Mammary epithelial cell (primary cell): ENCODE measurements at regions of chr17 and their contacts with region 1.

Region 1: DNA sequence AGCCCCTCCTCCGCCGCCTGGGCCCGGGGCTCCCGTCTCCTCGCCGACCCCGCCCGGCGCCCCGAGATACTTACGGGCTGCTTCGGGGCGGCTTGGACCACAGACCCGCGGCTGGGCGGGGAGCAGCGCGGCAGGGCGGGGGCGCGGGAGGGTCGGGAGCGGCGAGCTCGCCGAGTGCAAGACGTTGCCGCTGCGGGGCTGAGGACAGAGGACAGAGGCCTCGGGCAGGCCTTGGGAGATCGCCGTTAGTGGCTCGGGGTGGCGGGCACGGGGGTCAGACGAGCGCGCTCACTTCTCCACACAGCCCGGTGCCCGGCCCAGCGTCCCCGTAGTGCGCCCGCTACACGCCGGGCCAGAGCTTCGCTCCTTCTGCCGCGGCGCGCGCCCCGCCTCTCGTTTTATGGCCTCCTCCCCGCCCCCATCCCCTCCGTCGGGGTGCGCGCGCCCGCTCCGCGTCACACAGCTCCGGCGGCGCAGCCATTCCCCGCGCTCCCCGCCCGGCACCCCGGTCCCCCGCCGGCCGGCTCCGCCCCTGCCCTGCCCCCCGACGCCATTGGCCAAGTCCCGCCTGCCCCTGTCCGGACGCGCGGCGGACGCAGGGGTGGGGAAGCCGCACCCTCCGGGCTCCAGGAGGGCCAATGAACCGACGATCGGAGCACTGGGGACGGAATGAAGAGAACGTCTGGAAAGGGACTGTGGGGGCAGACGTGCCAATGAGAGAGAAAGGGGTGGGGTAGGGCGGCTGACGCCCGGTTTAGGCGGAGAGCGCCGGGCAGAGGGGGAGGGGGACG is at the start of gene TOB1:
- DNase-seq: peak; percentile 98
- H3K4me3 ChIP-seq: peak within 1 kb of the TSS; percentile 88 to 97 (median 94)
- H3K27ac ChIP-seq: peak within 1 kb of the TSS; percentile 97
- H3K4me1 ChIP-seq: peaks cover 16% of the 10 kb centered on the region
- H3K27me3 ChIP-seq: no peaks in the 10 kb centered on the region
- CTCF ChIP-seq: no peak
- total RNA-seq, gene TOB1: 51.2 to 149 TPM

Region 2: DNA sequence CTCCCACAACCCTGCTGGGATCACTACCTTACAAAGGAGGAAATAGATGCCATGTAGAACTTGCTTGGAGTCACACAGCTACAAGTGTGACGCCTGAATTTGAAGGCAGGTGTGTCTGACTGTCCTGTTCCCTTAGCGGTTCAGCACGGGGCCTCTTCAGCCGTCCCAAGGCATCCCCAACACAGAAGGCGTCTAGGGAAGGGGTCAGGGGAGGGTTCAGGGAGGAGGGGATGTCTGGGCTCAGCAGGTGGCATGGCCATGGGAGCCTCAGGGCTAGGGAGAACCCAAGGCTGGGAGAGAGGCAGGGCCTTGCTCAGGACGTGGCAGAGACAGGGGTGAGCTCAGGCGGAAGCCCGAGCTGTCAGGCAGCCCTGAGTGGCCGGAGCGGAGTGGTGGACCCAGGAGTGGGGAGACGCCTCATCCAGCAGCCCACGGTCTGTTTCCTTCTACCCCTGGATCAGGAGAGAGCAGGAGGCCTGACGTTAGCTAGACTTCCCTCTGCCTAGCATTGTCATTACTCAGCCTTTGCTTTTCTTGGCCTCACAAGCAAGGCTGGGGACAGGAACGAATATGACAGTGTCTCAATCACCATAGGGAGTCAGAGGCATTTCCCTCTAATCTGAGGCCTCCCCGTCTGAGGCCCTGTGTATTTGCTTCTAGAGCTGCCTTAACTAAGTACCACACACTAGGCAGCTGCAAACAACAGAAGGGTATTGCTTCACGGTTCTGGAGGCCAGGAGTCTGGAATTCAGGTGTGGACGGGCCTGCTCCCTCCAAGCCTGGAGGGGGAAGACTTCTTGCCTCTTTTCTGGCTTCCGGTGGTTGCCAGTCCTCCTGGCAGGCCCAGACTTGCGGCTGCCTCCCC is 67.5 kb before region 1 on chr17:
- CTCF ChIA-PET with region 1: no interaction called
- dilution Hi-C with region 1: no loop called
- in situ Hi-C with region 1: no loop called
- intact Hi-C with region 1: no loop called
- DNase-seq: peak; percentile 85
- H3K4me3 ChIP-seq: no peak overlapping the region
- H3K27ac ChIP-seq: peak overlapping the region; percentile 53
- H3K4me1 ChIP-seq: peaks cover 27% of the 10 kb centered on the region
- H3K27me3 ChIP-seq: no peaks in the 10 kb centered on the region
- CTCF ChIP-seq: no peak

Region 3: GRCh38 chr17:50883850-50884438 is 17.8 kb after region 1 on chr17:
- CTCF ChIA-PET with region 1: no interaction called
- dilution Hi-C with region 1: no loop called
- in situ Hi-C with region 1: no loop called
- intact Hi-C with region 1: loop called (anchors 2 kb)
- DNase-seq: no peak
- H3K4me3 ChIP-seq: no peak overlapping the region
- H3K27ac ChIP-seq: peak overlapping the region; percentile 5
- H3K4me1 ChIP-seq: peaks cover 24% of the 10 kb centered on the region
- H3K27me3 ChIP-seq: no peaks in the 10 kb centered on the region
- CTCF ChIP-seq: no peak

Region 4: DNA sequence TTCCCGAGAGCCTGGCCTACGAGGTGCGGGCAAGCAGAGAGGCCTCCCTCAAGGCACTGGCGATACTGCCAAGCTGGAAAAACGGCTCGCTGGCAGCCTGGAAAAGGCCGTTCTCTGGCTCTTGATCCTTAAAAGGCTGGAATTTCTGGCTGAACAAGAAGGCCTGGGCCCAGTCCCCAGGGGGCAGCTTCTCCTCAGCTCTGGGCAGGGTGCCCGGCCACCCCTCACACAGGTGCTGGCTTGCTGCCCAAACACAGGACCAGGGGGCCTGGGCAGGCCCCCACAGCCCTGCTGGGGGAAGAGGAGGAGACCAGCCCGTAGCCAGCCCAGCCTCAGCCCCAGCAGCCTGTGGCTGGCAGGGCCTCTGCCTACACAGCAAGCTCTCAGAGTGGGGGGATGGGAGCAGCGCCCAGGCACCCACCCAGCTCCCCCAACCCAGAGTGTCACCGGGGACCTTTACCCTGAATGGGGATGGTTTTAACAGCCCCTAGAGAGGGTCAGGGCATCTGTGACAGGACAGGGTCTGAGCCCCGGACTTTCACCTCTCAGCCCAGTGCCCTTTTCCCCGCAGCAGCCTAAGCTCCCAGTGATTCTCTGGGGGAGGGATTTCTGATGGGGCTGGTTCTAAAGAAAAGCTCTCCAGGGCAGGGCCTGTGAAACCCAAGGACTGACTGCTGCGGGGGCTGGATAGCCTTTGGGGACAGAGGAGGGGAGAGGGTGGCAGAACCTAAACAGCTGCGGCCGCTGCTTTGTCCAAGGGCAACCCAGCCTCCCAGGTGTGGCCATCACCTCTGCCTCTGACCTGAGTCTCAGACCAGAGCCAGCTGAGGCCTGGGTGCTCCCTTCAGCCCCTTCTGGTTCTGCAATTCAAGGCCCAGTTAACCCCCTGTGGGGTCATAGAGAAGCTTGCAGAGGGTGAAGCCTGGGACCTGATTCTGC is 38.6 kb after region 1 on chr17:
- CTCF ChIA-PET with region 1: no interaction called
- dilution Hi-C with region 1: loop called (anchors 5 kb)
- in situ Hi-C with region 1: no loop called
- intact Hi-C with region 1: loop called (anchors 1 kb)
- DNase-seq: no peak
- H3K4me3 ChIP-seq: no peak overlapping the region
- H3K27ac ChIP-seq: peak overlapping the region; percentile 90
- H3K4me1 ChIP-seq: peaks cover 50% of the 10 kb centered on the region
- H3K27me3 ChIP-seq: no peaks in the 10 kb centered on the region
- CTCF ChIP-seq: no peak

Region 5: DNA sequence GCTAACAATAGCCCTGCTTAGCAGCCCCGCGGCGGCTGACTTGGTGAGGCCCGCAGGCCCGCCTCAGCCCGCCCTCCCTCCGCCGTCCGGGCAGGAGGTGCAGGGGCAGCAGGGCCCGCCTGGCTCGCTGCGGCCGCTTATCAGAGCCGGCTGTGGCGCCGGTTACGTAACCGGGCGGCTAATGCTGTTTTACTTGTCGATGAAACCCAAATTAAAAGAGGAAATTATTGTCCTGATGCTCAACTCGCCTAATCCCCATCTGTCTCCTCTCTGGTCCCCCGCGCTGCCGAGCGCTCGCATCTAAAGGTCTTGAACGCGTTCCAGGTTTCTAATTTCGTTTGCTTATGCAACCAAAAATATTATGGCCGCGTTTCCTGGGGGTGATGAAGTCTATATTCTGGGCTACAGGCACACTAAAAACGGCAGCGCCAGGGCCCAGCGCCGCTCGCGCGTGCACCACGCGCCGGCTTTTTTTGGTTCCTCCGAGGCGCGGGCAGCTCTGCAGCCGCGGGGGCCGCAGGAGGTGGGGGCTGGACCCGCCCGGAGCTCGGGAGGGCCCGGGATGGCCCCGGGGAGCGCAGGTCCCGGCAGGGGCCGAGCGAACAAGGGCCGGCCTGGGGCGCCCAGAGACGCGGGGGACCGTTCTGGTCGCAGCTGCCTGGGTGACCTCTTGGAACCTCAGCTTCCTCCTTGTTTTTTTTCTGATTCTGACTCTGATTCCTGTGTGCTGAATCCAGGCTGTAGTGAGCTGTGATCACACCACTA is 65.1 kb after region 1 on chr17:
- CTCF ChIA-PET with region 1: interaction called, 5 read pairs
- dilution Hi-C with region 1: no loop called
- in situ Hi-C with region 1: no loop called
- intact Hi-C with region 1: loop called (anchors 1 kb)
- DNase-seq: peak; percentile 73
- H3K4me3 ChIP-seq: peak overlapping the region in 2 of 3 experiments; percentile 21 to 27
- H3K27ac ChIP-seq: peak overlapping the region; percentile 88
- H3K4me1 ChIP-seq: peaks cover 61% of the 10 kb centered on the region
- H3K27me3 ChIP-seq: no peaks in the 10 kb centered on the region
- CTCF ChIP-seq: no peak

Region 6: GRCh38 chr17:51132964-51133319 is 266.8 kb after region 1 on chr17:
- CTCF ChIA-PET with region 1: no interaction called
- dilution Hi-C with region 1: no loop called
- in situ Hi-C with region 1: no loop called
- intact Hi-C with region 1: no loop called
- DNase-seq: no peak
- H3K4me3 ChIP-seq: no peak overlapping the region
- H3K27ac ChIP-seq: no peak overlapping the region
- H3K4me1 ChIP-seq: peaks cover 3% of the 10 kb centered on the region
- H3K27me3 ChIP-seq: no peaks in the 10 kb centered on the region
- CTCF ChIP-seq: no peak